ENCODE measurements at regions of chr17 and their contacts with region 1.

Region 1: GRCh38 chr17:81484195-81484979 is 28.2 kb downstream of the ACTG1 start:
- DNase-seq: peak; percentile 89 to 96 (median 95)
- ATAC-seq: peak; percentile 67 to 75
- H3K4me3 ChIP-seq: peak overlapping the region; percentile 9
- H3K27ac ChIP-seq: no peak overlapping the region
- H3K4me1 ChIP-seq: peaks cover 14% of the 10 kb centered on the region
- H3K27me3 ChIP-seq: no peaks in the 10 kb centered on the region

Region 2: GRCh38 chr17:81253358-81254131 is 230.8 kb before region 1 on chr17:
- intact Hi-C with region 1: loop called (anchors 2 to 5 kb)
- DNase-seq: peak in 2 of 3 donors; percentile 64 to 65
- ATAC-seq: peak in 1 of 2 donors; percentile 35
- H3K4me3 ChIP-seq: no peak overlapping the region
- H3K27ac ChIP-seq: no peak overlapping the region
- H3K4me1 ChIP-seq: no peaks in the 10 kb centered on the region
- H3K27me3 ChIP-seq: no peaks in the 10 kb centered on the region

Region 3: DNA sequence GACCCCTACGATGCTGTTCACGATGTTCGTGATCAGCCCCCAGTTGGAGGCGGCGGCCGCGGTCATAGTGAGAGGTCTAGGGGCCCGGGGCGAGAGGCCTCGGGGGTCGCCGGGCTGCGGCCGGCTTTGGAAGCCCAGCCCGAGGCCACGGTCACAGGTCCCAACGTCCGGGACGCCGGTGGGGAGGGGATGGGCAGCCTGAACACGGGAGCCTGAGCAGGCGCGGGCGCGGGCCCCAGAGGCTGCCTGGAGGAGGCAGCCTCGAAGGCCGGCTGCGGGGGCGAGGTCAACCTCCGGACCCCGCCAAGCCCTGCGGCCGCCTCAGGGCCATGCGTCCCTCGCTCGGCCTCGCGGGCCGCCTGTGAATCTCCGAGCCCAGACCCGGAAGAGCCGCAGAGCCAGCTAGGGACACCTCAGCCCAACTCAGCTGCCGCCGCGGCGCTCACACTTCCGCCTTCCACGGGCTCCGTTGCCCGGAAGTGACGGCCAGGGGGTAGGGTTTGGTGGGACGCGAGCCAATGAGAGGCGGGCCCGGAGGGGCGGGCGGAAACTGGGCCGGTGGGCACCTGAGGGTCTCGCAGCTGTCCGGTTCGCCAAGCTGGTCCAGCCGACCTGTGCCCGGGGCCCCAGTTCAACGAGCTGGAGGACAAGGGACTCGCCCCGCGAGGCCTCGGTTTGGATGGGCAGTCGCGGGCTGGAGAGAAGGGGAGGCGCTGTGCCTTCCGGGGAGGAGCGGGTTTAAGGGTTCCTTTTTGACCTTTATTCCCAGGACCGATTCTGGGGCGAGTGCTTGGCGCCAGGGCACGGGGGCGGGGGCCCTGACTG is 189.3 kb before region 1 on chr17 and contains the start of gene SLC38A10:
- intact Hi-C with region 1: loop called in 1 of 4 experiments (anchors 5 kb)
- DNase-seq: peak; percentile 93 to 98 (median 98)
- ATAC-seq: peak; percentile 93 to 95
- H3K4me3 ChIP-seq: peak within 1 kb of the TSS; percentile 66
- H3K27ac ChIP-seq: peak within 1 kb of the TSS; percentile 83
- H3K4me1 ChIP-seq: peaks cover 7% of the 10 kb centered on the region
- H3K27me3 ChIP-seq: no peaks in the 10 kb centered on the region
- total RNA-seq, gene SLC38A10: 50.8 to 63.9 (median 53.5) TPM

Region 4: DNA sequence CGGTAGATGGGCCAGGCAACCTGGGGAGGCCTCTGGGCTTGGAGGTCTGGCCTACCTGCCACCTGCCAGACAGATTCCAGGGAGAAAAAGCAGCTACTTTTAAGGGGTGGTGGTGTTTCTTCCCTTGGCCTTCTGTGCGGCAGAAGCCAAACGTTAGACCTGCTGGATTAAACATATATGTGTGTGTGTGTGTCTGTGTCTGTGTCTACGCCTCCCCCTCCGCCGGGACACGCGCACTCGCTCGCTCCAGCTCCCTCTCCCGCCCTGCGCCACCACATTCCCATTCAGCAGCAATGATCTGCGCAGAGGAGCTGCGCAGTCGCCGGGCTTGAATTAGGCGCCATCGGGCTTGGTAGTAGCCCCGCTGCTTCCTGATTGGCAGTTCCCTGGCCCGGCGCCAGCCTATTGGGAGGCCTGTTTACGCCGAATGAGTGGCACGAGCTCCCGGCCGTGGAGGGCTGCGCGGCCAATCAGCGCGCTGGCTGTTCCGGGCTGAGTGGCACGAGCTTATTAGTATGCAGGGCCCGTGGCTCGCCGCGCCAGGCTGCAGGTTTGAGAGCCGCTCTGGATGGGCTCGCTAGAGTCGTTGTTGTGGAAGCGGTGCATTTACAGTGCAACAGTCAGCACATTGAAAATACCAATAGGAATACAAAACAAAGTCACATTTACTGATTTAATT is 89.3 kb before region 1 on chr17 and contains the start of gene BAHCC1:
- intact Hi-C with region 1: loop called (anchors 5 kb)
- DNase-seq: peak; percentile 100
- ATAC-seq: peak; percentile 85 to 90
- H3K4me3 ChIP-seq: peak within 1 kb of the TSS; percentile 91
- H3K27ac ChIP-seq: peak within 1 kb of the TSS; percentile 96
- H3K4me1 ChIP-seq: peaks cover 3% of the 10 kb centered on the region
- H3K27me3 ChIP-seq: no peaks in the 10 kb centered on the region
- total RNA-seq, gene BAHCC1: 8.3 to 12.8 (median 9.4) TPM

Region 5: DNA sequence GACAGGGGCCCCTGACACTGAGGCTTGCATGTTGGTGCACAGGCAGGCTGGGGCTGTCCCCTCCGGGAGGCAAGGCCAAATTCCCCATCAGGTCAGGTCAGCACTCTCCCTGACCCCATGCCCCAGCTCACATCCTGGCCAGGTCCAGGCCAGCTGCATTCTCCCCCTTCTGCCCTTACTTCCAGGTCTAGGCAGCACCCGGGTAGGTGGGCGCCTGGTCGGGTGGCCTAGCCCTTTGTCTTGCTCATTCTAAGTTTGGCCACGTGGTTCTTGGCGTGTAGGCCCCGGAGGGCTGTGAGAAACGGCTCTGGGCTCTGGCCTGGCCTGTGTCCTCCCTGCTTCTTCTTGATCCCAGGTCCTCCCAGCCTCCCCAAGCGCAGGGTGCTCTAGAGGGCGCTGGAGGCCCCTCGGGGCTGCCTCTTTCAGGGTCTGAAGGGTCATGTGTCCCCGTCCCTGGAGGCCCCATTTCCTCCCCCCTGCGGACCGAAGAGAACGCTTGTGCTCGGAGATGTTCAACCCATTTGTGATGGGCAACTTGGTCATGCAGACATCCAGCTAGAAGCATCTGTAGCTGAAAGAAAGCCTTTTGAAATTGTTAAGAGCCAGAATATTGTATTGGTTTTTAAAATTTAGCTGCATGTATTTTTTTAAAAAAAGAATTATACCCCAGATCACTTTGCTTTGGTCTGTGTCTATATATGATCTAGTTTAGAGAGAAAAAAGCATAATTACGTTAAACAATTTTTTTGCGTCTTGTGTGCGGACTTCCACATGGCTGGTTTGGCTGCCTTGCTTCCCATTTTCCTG is 82.5 kb before region 1 on chr17:
- intact Hi-C with region 1: loop called (anchors 5 kb)
- DNase-seq: peak; percentile 51 to 84 (median 77)
- ATAC-seq: peak; percentile 1 to 4
- H3K4me3 ChIP-seq: no peak overlapping the region
- H3K27ac ChIP-seq: peak overlapping the region; percentile 75
- H3K4me1 ChIP-seq: peaks cover 18% of the 10 kb centered on the region
- H3K27me3 ChIP-seq: no peaks in the 10 kb centered on the region

Region 6: DNA sequence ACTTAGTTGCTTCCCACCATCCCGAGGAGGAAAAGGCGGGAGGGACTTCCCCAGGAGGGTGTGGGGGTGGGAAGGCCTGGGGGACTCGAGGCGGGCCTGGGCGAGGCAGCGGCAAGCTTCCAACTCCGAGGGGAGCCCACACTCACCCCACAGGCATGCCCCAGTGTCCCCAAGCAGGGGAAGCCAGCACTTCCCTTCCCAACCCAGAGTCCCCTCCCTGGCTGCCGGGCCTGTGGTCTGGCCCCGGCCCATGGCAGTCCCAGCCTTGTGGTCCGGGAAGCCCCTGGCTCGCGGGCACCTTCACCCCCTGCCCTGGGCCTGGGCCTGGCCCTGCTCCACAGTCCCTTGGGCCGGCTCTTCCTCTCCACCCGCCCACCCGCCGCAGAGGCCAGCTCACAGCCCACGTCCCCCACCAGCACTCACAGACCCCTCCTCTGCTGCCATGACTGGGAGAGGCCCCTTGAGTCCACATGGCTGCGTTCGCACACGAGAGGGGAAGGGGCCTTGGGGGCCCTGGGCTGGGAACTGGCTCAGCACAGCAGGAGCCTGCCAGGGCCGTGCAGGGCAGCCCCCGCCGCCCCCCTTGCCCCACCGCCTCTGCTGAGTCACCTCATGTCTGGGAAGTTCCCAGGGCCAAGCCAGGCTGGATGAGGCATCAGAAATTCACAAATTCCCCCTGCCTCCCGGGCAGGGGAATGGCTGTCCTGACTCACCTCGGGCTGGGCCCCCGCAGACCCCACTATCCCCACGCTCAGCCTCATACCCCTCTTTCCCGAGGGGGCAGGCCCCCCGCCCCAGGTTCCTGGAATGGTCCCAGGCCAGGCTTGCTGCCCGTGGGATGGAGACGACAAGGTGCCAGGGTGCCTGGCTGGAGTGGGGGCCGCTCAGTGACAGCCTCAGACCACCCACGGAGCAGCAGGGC is 61.4 kb before region 1 on chr17:
- intact Hi-C with region 1: loop called in 2 of 4 experiments (anchors 5 to 10 kb)
- DNase-seq: peak; percentile 91 to 92 (median 91)
- ATAC-seq: peak; percentile 52 to 62
- H3K4me3 ChIP-seq: no peak overlapping the region
- H3K27ac ChIP-seq: peak overlapping the region; percentile 13
- H3K4me1 ChIP-seq: peaks cover 11% of the 10 kb centered on the region
- H3K27me3 ChIP-seq: no peaks in the 10 kb centered on the region

Region 7: DNA sequence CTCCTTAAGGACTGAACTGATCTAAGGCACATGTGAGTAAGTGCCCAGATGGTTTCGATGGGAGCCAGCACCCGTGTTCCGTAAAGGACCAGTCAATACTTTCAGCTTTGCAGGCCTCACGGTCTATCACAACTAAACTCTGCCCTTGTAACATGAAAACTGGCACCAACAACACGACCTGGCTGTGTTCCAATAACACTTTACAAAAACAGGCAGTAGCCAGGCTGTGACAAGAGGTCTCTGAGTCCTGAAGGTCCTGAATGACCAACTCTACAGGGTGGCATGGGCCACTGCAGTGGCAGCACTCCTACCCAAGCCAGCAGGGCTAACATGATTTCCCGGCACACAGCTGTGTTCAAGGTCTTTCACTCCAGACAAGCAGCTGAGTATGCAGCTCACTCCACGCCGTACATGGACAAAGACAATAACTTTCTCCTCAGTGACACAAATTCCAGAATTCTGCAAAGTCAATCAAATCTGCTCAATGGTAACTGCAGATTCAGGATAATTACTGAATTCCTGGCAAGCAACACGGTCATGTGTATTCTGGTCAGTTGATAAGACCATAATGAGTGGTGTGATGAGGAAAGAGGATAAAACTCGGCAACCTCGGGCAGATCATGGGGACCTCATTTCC is 137.2 kb after region 1 on chr17:
- intact Hi-C with region 1: no loop called
- DNase-seq: no peak
- ATAC-seq: peak; percentile 52 to 59
- H3K4me3 ChIP-seq: no peak overlapping the region
- H3K27ac ChIP-seq: no peak overlapping the region
- H3K4me1 ChIP-seq: peaks cover 5% of the 10 kb centered on the region
- H3K27me3 ChIP-seq: no peaks in the 10 kb centered on the region